ENCODE measurements at regions of chr5 and their contacts with region 1.

Region 1: DNA sequence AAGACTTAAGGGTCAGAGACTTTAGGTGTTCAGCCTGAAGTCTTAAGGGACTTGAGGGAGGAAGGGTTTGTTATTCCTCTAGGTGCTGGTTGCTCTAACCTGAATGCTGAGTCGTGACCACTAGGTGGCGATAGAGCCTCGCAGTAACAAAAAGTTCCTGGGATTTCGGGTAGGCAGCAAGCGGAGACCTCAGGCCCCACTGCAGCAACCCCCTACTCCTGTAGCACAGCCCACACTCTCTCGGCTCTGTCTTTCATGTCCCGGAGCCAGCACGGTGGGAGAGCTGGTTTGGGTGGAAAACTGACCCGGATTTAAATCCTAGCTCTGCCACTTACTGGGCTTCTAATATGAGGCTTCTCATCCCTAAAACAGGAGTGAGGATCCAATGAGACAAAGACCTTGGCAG is 100.3 kb upstream of the PANK3 start:
- DNase-seq: peak; percentile 75
- H3K4me3 ChIP-seq: no peak overlapping the region
- H3K27ac ChIP-seq: no peak overlapping the region
- H3K4me1 ChIP-seq: peaks cover 3% of the 10 kb centered on the region
- H3K27me3 ChIP-seq: no peaks in the 10 kb centered on the region
- CTCF ChIP-seq: peak; percentile 78 to 87
- POLR2A ChIP-seq: no peak

Region 2: GRCh38 chr5:168268949-168269943 is 410.3 kb before region 1 on chr5:
- CTCF ChIA-PET with region 1: no interaction called
- POLR2A ChIA-PET with region 1: no interaction called
- dilution Hi-C with region 1: no loop called
- intact Hi-C with region 1: loop called (anchors 1 kb)
- DNase-seq: peak; percentile 87
- H3K4me3 ChIP-seq: peak overlapping the region in 1 of 3 experiments; percentile 3
- H3K27ac ChIP-seq: no peak overlapping the region
- H3K4me1 ChIP-seq: no peaks in the 10 kb centered on the region
- H3K27me3 ChIP-seq: no peaks in the 10 kb centered on the region
- CTCF ChIP-seq: peak; percentile 87 to 88
- POLR2A ChIP-seq: no peak

Region 3: DNA sequence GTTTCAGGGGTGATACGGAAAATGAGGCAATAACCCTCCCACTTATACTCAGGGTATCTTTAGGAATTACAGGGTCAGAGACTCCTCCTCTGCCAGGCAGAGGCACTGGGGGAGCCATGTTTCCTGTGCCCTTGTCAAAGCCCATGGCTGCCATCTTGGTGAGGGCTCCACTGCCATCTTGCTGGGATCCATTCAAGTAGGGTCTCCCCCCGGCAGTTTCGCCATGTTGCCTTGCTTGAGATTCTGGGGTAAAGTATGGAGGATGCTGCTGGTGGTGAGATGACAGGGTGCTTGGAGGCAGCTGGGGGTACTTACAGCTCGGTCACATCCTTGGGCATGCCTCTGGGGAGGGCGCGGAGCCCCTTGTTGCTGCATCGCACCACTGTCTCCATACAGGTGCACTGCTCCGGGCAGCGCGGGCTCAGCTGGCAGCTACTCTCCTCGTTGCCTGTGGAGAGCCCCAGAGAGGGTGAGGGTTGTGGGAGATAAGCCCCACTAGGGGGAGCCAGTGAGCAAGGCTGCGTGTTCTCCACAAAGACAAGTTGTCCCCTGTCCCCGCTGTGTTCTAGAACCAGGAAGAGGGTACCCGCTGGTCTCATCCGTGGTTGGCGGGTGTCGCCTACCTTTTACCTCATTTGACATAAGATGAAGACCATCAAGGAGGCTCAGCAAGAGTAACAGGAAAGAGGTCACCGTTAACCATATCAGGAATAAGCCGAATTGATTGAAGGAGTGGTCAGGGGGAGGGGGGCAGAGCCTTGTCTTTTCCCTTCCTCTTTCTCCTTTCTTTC is 68.7 kb after region 1 on chr5:
- CTCF ChIA-PET with region 1: no interaction called
- POLR2A ChIA-PET with region 1: no interaction called
- dilution Hi-C with region 1: no loop called
- intact Hi-C with region 1: loop called (anchors 2 kb)
- DNase-seq: no peak
- H3K4me3 ChIP-seq: no peak overlapping the region
- H3K27ac ChIP-seq: no peak overlapping the region
- H3K4me1 ChIP-seq: no peaks in the 10 kb centered on the region
- H3K27me3 ChIP-seq: no peaks in the 10 kb centered on the region
- CTCF ChIP-seq: peak; percentile 34 to 48
- POLR2A ChIP-seq: no peak

Region 4: GRCh38 chr5:168947212-168947868 is 267.8 kb after region 1 on chr5:
- CTCF ChIA-PET with region 1: interaction called, 4 read pairs
- POLR2A ChIA-PET with region 1: no interaction called
- dilution Hi-C with region 1: no loop called
- intact Hi-C with region 1: loop called (anchors 1 kb)
- DNase-seq: peak; percentile 24
- H3K4me3 ChIP-seq: no peak overlapping the region
- H3K27ac ChIP-seq: no peak overlapping the region
- H3K4me1 ChIP-seq: no peaks in the 10 kb centered on the region
- H3K27me3 ChIP-seq: no peaks in the 10 kb centered on the region
- CTCF ChIP-seq: peak; percentile 66 to 75
- POLR2A ChIP-seq: no peak

Region 5: GRCh38 chr5:169302491-169303118 is 623.1 kb after region 1 on chr5:
- CTCF ChIA-PET with region 1: no interaction called
- POLR2A ChIA-PET with region 1: no interaction called
- dilution Hi-C with region 1: no loop called
- intact Hi-C with region 1: loop called (anchors 1 kb)
- DNase-seq: peak; percentile 85
- H3K4me3 ChIP-seq: no peak overlapping the region
- H3K27ac ChIP-seq: no peak overlapping the region
- H3K4me1 ChIP-seq: peaks cover 4% of the 10 kb centered on the region
- H3K27me3 ChIP-seq: peaks cover 21 to 36% of the 10 kb centered on the region in 2 experiments
- CTCF ChIP-seq: peak; percentile 90 to 93
- POLR2A ChIP-seq: no peak

Measured in endothelial cell of umbilical vein (primary cell).